HEK293 (cell line): ENCODE measurements at regions of chr1 and their contacts with region 1.

Region 1: DNA sequence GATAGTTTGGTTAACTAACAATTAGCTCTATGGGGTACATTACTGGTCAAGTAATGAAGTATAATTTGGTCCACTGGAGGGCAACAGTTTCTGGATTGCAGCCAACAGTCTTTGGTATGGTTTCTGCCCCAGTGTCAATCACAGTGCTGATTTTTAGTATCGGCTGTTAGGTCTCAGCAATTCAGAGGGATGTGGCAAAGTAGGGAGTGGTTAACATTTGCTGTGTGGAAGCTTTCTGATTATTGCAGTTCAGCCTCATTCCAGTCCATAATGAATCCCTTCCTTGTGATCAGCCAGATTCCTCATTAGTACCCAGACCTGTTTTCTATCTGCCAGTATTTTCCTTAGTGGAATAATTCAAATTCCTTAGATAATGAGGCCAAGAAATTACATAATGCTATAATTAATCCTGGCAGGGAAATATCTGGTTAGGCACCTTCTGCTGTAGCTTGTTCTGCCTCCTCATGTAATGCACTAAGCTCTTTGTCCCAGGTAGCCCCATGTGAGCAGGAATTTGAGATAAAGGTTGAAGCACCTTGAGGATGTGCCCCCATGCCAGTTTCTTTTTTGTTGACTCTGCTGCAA is 14.0 kb downstream of the F3 start:
- H3K4me3 ChIP-seq: no peak overlapping the region
- H3K27ac ChIP-seq: no peak overlapping the region
- H3K4me1 ChIP-seq: no peaks in the 10 kb centered on the region
- CTCF ChIP-seq: no peak

Region 2: GRCh38 chr1:94514095-94514727 is 13.3 kb before region 1 on chr1:
- CTCF ChIA-PET with region 1: interaction called, 12 read pairs
- POLR2A ChIA-PET with region 1: interaction called, 3 read pairs
- H3K4me3 ChIP-seq: no peak overlapping the region
- H3K27ac ChIP-seq: no peak overlapping the region
- H3K4me1 ChIP-seq: no peaks in the 10 kb centered on the region
- CTCF ChIP-seq: no peak

Region 3: DNA sequence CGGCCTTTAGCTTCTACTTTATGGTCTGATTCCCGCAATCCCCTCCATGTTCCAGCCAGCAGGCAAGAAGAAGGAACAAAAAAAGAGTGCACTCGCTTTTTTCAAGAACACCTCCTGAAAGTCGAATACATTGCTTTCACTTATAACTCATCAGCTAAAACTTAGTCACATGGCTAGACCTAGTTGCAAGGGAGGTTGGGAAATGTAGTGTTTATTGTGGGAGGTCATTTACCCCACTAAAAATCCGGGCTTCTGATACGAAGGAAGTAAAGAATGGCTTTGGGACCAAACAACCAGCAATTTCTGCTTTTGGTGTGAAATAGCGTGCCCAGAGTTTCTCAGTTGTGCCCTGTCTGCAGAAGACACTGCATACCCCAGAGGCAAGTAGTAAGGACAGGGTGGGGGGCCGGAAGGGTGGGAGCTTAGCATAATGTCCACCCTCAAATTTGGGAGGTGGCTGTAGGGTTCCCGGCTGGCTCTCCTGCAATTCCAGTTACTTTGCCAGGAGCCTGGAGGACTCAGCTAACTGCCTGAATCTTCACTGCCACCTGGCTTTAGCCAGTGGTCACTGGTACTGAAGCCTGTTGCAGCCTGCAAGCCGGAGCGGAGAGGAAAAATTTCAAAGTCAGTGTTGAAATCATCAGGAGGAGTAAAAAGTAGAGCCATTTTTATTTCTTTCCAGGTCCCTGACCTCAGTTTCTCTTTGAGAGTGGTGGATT is 71.7 kb after region 1 on chr1:
- CTCF ChIA-PET with region 1: interaction called, 10 read pairs
- POLR2A ChIA-PET with region 1: no interaction called
- H3K4me3 ChIP-seq: no peak overlapping the region
- H3K27ac ChIP-seq: no peak overlapping the region
- H3K4me1 ChIP-seq: no peaks in the 10 kb centered on the region
- CTCF ChIP-seq: no peak